HCT116 (cell line): ENCODE measurements at regions of chr15 and their contacts with region 1.

Region 1: GRCh38 chr15:65304389-65305144 is at the start of gene RNU5B-1:
- DNase-seq: peak; percentile 97
- ATAC-seq: peak; percentile 82
- H3K4me3 ChIP-seq: peak within 1 kb of the TSS; percentile 49 to 51
- H3K27ac ChIP-seq: peak within 1 kb of the TSS; percentile 67
- H3K4me1 ChIP-seq: peaks cover 20 to 29% of the 10 kb centered on the region in 2 experiments
- H3K27me3 ChIP-seq: no peaks in the 10 kb centered on the region
- CTCF ChIP-seq: peak; percentile 68 to 90 (median 86); a peak in 4 of 6 replicates
- POLR2A ChIP-seq: peak; percentile 100
- RAD21 ChIP-seq: no peak; the same call in 1 of the 2 replicates
- total RNA-seq, gene RNU5B-1: not detected

Region 2: DNA sequence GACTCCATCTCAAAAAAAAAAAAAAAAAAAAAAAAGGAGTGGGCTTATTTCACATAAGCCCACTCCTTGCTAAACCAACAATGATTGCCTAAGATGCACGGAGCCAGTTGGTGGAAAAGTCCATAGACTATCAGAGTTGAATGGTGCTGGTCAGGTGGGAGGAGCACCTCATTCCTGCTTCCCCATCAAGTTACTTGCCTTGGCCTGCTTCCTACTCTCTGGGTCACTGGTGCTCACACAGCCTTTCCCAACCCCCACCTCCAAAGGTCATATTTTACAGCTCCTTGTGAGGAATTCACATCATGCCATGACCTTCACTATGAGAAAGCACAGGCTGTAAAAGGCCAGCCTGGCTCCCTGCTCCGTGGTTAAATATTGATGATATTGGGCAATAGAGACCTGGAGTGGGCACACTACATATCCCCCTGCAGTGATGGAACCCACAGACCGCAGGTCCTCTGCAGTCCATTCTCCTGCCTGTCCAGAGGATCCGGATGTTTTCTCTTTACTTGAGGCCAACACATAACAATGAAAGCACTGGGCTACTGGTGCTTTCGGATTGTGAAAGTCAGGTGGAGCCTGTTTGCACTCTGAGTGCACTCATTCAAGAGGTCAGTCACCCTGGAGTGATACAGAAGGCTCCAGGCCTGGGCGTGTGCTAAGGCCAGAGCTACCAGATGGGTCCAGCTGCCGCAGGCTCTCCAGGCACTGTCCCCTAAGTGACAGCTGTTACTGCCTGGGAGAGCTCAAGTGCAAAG is 259.7 kb before region 1 on chr15 and contains the start of gene SLC51B:
- CTCF ChIA-PET with region 1: no interaction called
- POLR2A ChIA-PET with region 1: interaction called, 10 read pairs
- RAD21 ChIA-PET with region 1: no interaction called
- intact Hi-C with region 1: no loop called
- DNase-seq: no peak
- ATAC-seq: no peak
- H3K4me3 ChIP-seq: no peak within 1 kb of the TSS; a peak in 1 of 4 replicates
- H3K27ac ChIP-seq: no peak within 1 kb of the TSS
- H3K4me1 ChIP-seq: peaks cover 21 to 38% of the 10 kb centered on the region in 2 experiments
- H3K27me3 ChIP-seq: no peaks in the 10 kb centered on the region
- CTCF ChIP-seq: no peak
- POLR2A ChIP-seq: no peak
- RAD21 ChIP-seq: no peak
- total RNA-seq, gene SLC51B: not detected

Region 3: GRCh38 chr15:65275728-65276126 is 28.8 kb before region 1 on chr15:
- CTCF ChIA-PET with region 1: no interaction called
- POLR2A ChIA-PET with region 1: interaction called, 10 read pairs
- RAD21 ChIA-PET with region 1: no interaction called
- intact Hi-C with region 1: no loop called
- DNase-seq: no peak
- ATAC-seq: peak; percentile 53
- H3K4me3 ChIP-seq: peak overlapping the region in 1 of 2 experiments; percentile 8; a peak in 1 of 4 replicates
- H3K27ac ChIP-seq: peak overlapping the region; percentile 2; the same call in 1 of the 2 replicates
- H3K4me1 ChIP-seq: peaks cover 7 to 19% of the 10 kb centered on the region in 2 experiments
- H3K27me3 ChIP-seq: no peaks in the 10 kb centered on the region
- CTCF ChIP-seq: no peak
- POLR2A ChIP-seq: no peak
- RAD21 ChIP-seq: no peak

Region 4: DNA sequence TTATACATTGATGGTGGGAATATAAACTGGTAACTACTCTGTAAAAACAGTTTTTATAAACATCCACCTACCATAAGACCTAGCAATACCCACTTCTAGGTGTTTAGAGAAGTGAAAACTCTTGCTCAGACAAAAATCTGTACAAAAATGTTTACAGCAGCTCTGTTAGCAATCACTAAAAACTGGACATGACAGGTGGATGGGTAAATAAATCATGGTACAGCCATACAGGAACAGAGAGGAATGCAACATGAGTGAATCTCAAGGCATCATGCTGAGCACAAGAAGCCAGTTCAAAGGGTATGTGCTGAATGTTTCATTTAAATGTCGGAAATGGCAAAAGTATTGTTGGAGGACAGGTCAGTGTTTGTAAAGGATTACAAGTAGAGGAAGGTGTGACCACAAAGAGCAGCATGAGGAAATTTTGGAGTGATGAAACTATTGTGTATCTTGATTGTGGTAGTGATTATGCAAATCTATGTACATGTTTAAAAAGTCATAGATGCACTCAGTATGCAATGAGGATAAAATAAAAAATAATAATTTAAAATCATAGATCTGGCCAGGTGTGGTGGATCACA is 11.5 kb before region 1 on chr15:
- CTCF ChIA-PET with region 1: no interaction called
- POLR2A ChIA-PET with region 1: interaction called, 38 read pairs
- RAD21 ChIA-PET with region 1: no interaction called
- intact Hi-C with region 1: loop called (anchors 1 kb)
- DNase-seq: no peak
- ATAC-seq: no peak
- H3K4me3 ChIP-seq: no peak overlapping the region
- H3K27ac ChIP-seq: no peak overlapping the region
- H3K4me1 ChIP-seq: peaks cover 11 to 29% of the 10 kb centered on the region in 2 experiments
- H3K27me3 ChIP-seq: no peaks in the 10 kb centered on the region
- CTCF ChIP-seq: no peak
- POLR2A ChIP-seq: no peak
- RAD21 ChIP-seq: no peak

Region 5: DNA sequence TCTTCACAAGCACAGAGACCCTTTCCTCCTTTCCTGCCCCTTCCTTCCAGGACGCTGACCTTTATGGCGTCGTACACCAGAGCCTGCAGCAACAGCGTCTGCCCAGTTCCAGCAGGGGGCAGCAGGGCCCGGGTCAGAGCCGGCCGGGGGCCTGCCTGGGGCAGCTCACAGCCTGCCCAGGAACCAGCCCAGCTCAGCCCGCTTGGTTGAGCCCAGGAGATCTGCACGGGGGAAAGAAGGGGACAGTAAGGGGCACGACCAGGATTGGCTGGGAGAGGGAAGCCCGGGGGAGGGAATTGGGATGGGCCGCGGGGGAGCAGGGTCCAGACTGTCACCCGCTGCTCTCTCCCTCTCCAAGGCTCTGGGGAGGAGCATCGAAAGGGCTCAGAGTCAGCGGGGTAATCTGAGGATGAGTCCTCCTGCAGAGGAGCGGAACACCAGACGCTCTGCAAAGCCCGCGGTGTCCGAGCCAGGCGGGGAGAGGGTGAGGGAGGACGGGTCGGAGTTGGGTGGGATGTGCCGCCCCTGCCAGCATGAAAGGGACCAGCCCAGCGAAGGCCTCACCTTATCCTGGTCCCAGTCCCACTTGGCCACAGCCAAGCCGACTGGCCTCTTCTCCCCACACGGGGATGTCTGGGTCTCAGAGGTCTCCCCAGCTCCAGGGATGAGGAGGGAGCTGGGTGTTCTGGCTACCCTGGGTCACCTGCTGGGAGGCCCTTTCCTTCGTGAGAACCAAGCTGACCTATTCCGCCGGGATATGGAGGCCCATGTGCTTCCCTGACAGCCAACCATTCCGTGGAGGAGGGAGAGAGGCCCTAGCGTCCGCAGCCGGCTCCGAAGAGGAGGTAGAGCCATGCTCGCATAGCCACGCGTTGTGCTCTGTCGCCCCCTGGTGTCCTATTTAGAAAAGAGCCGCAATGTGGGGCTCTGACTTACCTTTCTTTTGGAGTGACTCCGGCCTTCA is 80.6 kb after region 1 on chr15:
- CTCF ChIA-PET with region 1: interaction called, 7 read pairs
- POLR2A ChIA-PET with region 1: interaction called, 13 read pairs
- RAD21 ChIA-PET with region 1: no interaction called
- intact Hi-C with region 1: no loop called
- DNase-seq: peak; percentile 74
- ATAC-seq: peak; percentile 87
- H3K4me3 ChIP-seq: peak overlapping the region; percentile 39 to 59
- H3K27ac ChIP-seq: peak overlapping the region; percentile 70
- H3K4me1 ChIP-seq: peaks cover 8 to 21% of the 10 kb centered on the region in 2 experiments
- H3K27me3 ChIP-seq: no peaks in the 10 kb centered on the region; the same call in 1 of the 2 replicates
- CTCF ChIP-seq: peak; percentile 88 to 97 (median 93)
- POLR2A ChIP-seq: no peak
- RAD21 ChIP-seq: peak; percentile 93